CD8-positive, alpha-beta T cell (primary cell): ENCODE measurements at regions of chr13 and their contacts with region 1.

Region 1: DNA sequence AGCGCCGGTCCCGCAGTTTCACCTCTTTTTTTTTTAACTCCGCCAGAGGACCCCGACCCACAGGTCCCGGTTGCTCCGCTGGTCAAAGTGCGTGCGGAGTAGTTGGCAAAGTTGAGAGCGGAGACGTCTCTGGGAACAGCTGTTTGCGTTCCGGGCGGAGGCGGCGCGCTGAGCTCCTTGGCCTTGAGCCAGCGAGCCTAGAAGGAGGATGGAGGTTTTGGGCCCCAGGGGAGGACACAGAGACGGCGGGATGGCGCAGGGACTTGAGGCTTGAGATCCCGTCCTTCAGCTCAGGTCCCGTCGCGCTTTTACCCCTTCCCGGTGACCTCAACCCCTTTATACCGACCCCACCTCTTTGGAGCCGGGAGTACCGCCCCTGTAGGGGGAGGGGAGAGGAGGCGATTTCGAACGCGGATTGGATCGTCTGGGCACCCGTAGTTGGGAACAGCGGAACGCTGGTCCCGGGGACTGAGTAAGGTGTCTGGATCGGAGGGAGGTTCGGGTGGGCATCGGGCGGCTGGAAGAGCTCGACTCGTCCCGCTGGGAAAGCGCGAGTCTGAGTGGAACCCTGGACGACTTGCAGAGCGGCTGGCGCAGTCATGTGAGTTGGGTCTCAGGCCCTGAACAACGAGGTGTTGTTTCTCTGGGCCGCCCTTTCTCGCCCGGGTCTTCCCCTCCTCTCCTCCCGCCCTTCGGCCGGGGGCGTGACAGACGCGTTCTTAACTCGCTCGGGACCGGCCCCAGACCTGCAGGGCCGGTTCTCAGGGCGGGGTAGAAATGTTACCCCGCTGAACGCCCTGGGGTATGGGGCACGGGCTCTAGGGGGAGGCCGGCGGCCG is at the start of gene WBP4:
- DNase-seq: peak; percentile 73 to 94 (median 85)
- ATAC-seq: peak; percentile 58
- H3K4me3 ChIP-seq: peak within 1 kb of the TSS; percentile 86 to 96
- H3K4me3 Mint-ChIP-seq: peak within 1 kb of the TSS; percentile 100
- H3K27ac ChIP-seq: peak within 1 kb of the TSS; percentile 81 to 89
- H3K27ac Mint-ChIP-seq: peak within 1 kb of the TSS; percentile 100
- H3K4me1 ChIP-seq: peaks cover 15% of the 10 kb centered on the region
- H3K4me1 Mint-ChIP-seq: peaks cover 50% of the 10 kb centered on the region
- H3K27me3 ChIP-seq: no peaks in the 10 kb centered on the region
- H3K27me3 Mint-ChIP-seq: no peaks in the 10 kb centered on the region
- CTCF ChIP-seq: no peak
- total RNA-seq, gene WBP4: 6.1 to 7.2 TPM

Region 2: DNA sequence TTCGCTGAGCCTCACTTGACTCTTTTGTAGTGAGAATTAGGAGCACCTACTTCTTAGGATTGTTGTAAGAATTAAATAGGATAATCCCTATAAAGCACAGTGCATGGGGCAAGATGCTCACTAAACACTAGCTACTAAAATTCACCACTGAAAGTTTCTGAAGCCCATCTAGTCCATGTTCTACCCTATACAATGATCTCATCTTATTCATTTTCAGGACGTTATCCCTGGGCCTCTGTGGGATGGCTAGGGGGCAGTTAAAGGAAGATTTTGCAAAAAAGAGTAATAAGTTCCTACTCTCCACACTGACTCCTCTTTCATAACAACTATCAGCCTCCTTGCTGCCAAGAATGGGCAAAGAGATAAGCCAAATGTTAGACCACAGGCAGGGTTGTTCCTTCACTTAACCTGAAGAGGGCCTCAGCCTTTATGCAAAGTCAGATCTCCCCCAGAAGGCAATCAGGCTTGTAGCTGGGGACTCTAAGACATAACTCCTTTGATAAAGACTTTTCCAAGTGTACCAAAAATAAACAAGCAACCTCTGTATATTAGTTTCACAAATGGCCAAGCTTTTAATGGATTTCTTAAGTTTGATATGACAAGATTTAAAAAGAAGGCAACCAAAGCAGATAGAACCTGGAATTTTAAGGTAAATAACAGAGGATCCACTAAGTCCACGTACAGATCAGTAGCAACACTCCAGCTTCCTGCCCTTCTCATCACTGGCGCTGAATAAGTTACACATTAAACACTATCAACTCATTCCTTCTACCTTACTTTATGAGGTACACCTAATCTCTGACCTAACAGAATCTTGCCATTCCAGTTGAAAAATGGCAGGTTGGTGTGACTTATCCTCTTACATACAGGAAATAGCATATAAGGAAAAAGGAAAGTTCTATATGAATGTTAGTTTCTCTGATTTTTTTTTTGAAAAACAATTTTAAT is 86.6 kb before region 1 on chr13:
- CTCF ChIA-PET with region 1: interaction called, 5 read pairs
- POLR2A ChIA-PET with region 1: interaction called, 13 read pairs
- intact Hi-C with region 1: loop called (anchors 2 kb)
- DNase-seq: peak in 5 of 9 experiments; percentile 34 to 82 (median 55)
- ATAC-seq: peak; percentile 84
- H3K4me3 ChIP-seq: peak overlapping the region in 1 of 2 experiments; percentile 8
- H3K4me3 Mint-ChIP-seq: peak overlapping the region; percentile 63
- H3K27ac ChIP-seq: peak overlapping the region in 1 of 2 experiments; percentile 50
- H3K27ac Mint-ChIP-seq: peak overlapping the region; percentile 68
- H3K4me1 ChIP-seq: peaks cover 82% of the 10 kb centered on the region
- H3K4me1 Mint-ChIP-seq: peaks cover 93% of the 10 kb centered on the region
- H3K27me3 ChIP-seq: no peaks in the 10 kb centered on the region
- H3K27me3 Mint-ChIP-seq: no peaks in the 10 kb centered on the region
- CTCF ChIP-seq: peak; percentile 66

Region 3: DNA sequence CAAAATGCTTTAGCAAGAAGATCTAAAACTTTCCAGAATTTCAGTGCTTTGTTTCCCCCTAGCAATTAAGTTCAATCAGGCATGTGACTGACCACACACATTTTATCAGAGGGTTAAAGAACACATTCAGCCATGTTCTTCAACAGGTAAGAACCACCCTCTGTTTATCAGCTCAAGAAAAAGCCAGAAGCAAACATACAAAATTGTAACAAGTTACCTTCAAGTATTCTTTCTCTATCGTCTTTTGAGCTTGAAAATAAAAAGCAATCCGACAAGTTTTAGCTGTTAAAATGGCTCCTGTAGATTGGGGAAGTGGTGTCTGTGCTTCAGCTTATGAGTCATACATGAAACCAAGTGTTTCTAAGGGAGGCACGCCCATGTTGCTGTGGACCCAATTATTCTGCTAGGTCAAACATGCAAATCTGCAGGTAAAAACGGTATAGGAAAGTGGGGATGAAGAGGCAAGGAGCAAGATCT is 42.2 kb before region 1 on chr13 and contains the start of gene ELF1:
- CTCF ChIA-PET with region 1: interaction called, 6 read pairs
- POLR2A ChIA-PET with region 1: interaction called, 45 read pairs
- intact Hi-C with region 1: loop called (anchors 1 to 2 kb)
- DNase-seq: peak in 8 of 9 experiments; percentile 28 to 89 (median 63)
- ATAC-seq: peak; percentile 88
- H3K4me3 ChIP-seq: peak within 1 kb of the TSS; percentile 56 to 68
- H3K4me3 Mint-ChIP-seq: peak within 1 kb of the TSS; percentile 88
- H3K27ac ChIP-seq: peak within 1 kb of the TSS; percentile 91 to 95
- H3K27ac Mint-ChIP-seq: peak within 1 kb of the TSS; percentile 97
- H3K4me1 ChIP-seq: peaks cover 25% of the 10 kb centered on the region
- H3K4me1 Mint-ChIP-seq: peaks cover 47% of the 10 kb centered on the region
- H3K27me3 ChIP-seq: no peaks in the 10 kb centered on the region
- H3K27me3 Mint-ChIP-seq: no peaks in the 10 kb centered on the region
- CTCF ChIP-seq: no peak
- total RNA-seq, gene ELF1: 308 to 313 TPM

Region 4: GRCh38 chr13:41029629-41030028 is 31.7 kb before region 1 on chr13:
- CTCF ChIA-PET with region 1: no interaction called
- POLR2A ChIA-PET with region 1: no interaction called
- intact Hi-C with region 1: no loop called
- DNase-seq: peak in 3 of 9 experiments; percentile 12 to 44 (median 31)
- ATAC-seq: peak; percentile 38
- H3K4me3 ChIP-seq: no peak overlapping the region
- H3K4me3 Mint-ChIP-seq: no peak overlapping the region
- H3K27ac ChIP-seq: no peak overlapping the region
- H3K27ac Mint-ChIP-seq: no peak overlapping the region
- H3K4me1 ChIP-seq: peaks cover 6% of the 10 kb centered on the region
- H3K4me1 Mint-ChIP-seq: peaks cover 21% of the 10 kb centered on the region
- H3K27me3 ChIP-seq: no peaks in the 10 kb centered on the region
- H3K27me3 Mint-ChIP-seq: no peaks in the 10 kb centered on the region
- CTCF ChIP-seq: no peak

Region 5: GRCh38 chr13:41193919-41194824 is 132.9 kb after region 1 on chr13 and contains the start of gene KBTBD7:
- CTCF ChIA-PET with region 1: interaction called, 4 read pairs
- POLR2A ChIA-PET with region 1: no interaction called
- intact Hi-C with region 1: loop called (anchors 1 to 2 kb)
- DNase-seq: peak; percentile 74 to 93 (median 90)
- ATAC-seq: peak; percentile 95
- H3K4me3 ChIP-seq: peak within 1 kb of the TSS; percentile 67 to 97
- H3K4me3 Mint-ChIP-seq: peak within 1 kb of the TSS; percentile 92
- H3K27ac ChIP-seq: peak within 1 kb of the TSS; percentile 53 to 68
- H3K27ac Mint-ChIP-seq: peak within 1 kb of the TSS; percentile 93
- H3K4me1 ChIP-seq: peaks cover 14% of the 10 kb centered on the region
- H3K4me1 Mint-ChIP-seq: peaks cover 39% of the 10 kb centered on the region
- H3K27me3 ChIP-seq: no peaks in the 10 kb centered on the region
- H3K27me3 Mint-ChIP-seq: no peaks in the 10 kb centered on the region
- CTCF ChIP-seq: no peak
- total RNA-seq, gene KBTBD7: 2.2 to 2.3 TPM

Region 6: GRCh38 chr13:41352935-41353840 is 291.9 kb after region 1 on chr13:
- CTCF ChIA-PET with region 1: no interaction called
- POLR2A ChIA-PET with region 1: no interaction called
- intact Hi-C with region 1: loop called in 1 of 2 experiments (anchors 10 kb)
- DNase-seq: peak; percentile 21 to 83 (median 57)
- ATAC-seq: peak; percentile 55
- H3K4me3 ChIP-seq: no peak overlapping the region
- H3K4me3 Mint-ChIP-seq: peak overlapping the region; percentile 54
- H3K27ac ChIP-seq: peak overlapping the region in 1 of 2 experiments; percentile 58
- H3K27ac Mint-ChIP-seq: peak overlapping the region; percentile 94
- H3K4me1 ChIP-seq: peaks cover 49% of the 10 kb centered on the region
- H3K4me1 Mint-ChIP-seq: peaks cover 59% of the 10 kb centered on the region
- H3K27me3 ChIP-seq: no peaks in the 10 kb centered on the region
- H3K27me3 Mint-ChIP-seq: no peaks in the 10 kb centered on the region
- CTCF ChIP-seq: peak; percentile 95

Region 7: DNA sequence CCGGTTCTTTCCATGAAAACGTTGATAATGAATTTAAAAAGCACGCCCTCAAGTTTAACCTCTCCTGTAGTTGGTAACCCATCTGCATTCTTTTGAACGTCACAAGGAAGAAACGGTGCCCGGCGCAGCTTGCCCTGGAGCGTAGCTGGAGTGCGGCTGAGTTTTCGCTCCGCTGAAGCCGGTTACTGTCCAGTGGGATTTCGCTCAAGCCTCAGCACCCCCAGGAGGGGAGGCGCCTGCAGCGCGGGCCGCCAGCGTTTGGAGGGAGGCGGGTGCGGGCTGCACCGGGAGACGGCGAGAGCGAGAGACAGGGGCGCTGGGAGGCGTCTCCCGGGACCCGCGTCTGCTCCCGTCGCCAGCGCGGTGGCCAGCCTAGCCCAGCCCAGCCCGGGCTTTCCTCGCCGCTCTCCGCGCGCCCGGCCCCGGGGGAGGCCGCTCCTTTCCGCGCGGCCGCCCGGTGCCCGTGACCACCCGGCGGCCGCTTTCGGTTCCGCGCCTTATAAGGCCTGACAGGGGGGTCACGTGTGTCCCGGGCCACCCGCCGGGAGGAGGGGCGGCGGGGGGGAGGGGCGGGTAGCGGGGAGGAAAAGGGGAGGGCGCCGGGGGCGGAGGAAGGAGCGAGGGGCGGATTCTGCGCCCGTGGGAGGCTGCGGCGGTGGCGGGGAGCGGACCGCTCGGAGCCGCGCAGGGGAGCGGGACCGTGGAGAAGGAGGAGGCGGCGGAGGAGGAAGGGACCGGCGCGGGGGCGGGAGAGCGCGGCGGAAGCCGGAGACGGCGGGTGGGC is 978.8 kb after region 1 on chr13:
- CTCF ChIA-PET with region 1: no interaction called
- POLR2A ChIA-PET with region 1: no interaction called
- intact Hi-C with region 1: loop called in 1 of 2 experiments (anchors 5 kb)
- DNase-seq: peak; percentile 70 to 94 (median 88)
- ATAC-seq: peak; percentile 81
- H3K4me3 ChIP-seq: peak overlapping the region; percentile 47 to 88
- H3K4me3 Mint-ChIP-seq: peak overlapping the region; percentile 91
- H3K27ac ChIP-seq: peak overlapping the region; percentile 23 to 72
- H3K27ac Mint-ChIP-seq: peak overlapping the region; percentile 72
- H3K4me1 ChIP-seq: peaks cover 9% of the 10 kb centered on the region
- H3K4me1 Mint-ChIP-seq: peaks cover 16% of the 10 kb centered on the region
- H3K27me3 ChIP-seq: no peaks in the 10 kb centered on the region
- H3K27me3 Mint-ChIP-seq: no peaks in the 10 kb centered on the region
- CTCF ChIP-seq: no peak